Activated CD8-positive, alpha-beta T cell treated with anti-CD3 and anti-CD28 coated beads for 36 hours (primary cell): ENCODE measurements at regions of chr1 and their contacts with region 1.

Region 1: GRCh38 chr1:92536980-92537884 is 50.5 kb upstream of the GFI1 start:
- DNase-seq: peak; percentile 27
- ATAC-seq: peak; percentile 56
- H3K4me3 Mint-ChIP-seq: peak overlapping the region; percentile 64
- H3K27ac Mint-ChIP-seq: peak overlapping the region; percentile 89
- H3K4me1 Mint-ChIP-seq: peaks cover 80% of the 10 kb centered on the region
- H3K27me3 Mint-ChIP-seq: no peaks in the 10 kb centered on the region
- CTCF ChIP-seq: no peak

Region 2: GRCh38 chr1:92577261-92577895 is 40.1 kb after region 1 on chr1:
- CTCF ChIA-PET with region 1: interaction called, 13 read pairs
- POLR2A ChIA-PET with region 1: interaction called, 14 read pairs
- intact Hi-C with region 1: loop called (anchors 2 kb)
- DNase-seq: no peak
- ATAC-seq: peak; percentile 63
- H3K4me3 Mint-ChIP-seq: peak overlapping the region; percentile 84
- H3K27ac Mint-ChIP-seq: peak overlapping the region; percentile 91
- H3K4me1 Mint-ChIP-seq: peaks cover 65% of the 10 kb centered on the region
- H3K27me3 Mint-ChIP-seq: no peaks in the 10 kb centered on the region
- CTCF ChIP-seq: no peak

Region 3: GRCh38 chr1:92583821-92584760 is 46.9 kb after region 1 on chr1:
- CTCF ChIA-PET with region 1: interaction called, 27 read pairs
- POLR2A ChIA-PET with region 1: interaction called, 31 read pairs
- intact Hi-C with region 1: loop called (anchors 1 kb)
- DNase-seq: peak; percentile 27
- ATAC-seq: peak; percentile 65
- H3K4me3 Mint-ChIP-seq: peak overlapping the region; percentile 69
- H3K27ac Mint-ChIP-seq: peak overlapping the region; percentile 95
- H3K4me1 Mint-ChIP-seq: peaks cover 66% of the 10 kb centered on the region
- H3K27me3 Mint-ChIP-seq: no peaks in the 10 kb centered on the region
- CTCF ChIP-seq: peak; percentile 62